Heart left ventricle (tissue), 16 donors: ENCODE measurements at regions of chr7 and their contacts with region 1.

Region 1: DNA sequence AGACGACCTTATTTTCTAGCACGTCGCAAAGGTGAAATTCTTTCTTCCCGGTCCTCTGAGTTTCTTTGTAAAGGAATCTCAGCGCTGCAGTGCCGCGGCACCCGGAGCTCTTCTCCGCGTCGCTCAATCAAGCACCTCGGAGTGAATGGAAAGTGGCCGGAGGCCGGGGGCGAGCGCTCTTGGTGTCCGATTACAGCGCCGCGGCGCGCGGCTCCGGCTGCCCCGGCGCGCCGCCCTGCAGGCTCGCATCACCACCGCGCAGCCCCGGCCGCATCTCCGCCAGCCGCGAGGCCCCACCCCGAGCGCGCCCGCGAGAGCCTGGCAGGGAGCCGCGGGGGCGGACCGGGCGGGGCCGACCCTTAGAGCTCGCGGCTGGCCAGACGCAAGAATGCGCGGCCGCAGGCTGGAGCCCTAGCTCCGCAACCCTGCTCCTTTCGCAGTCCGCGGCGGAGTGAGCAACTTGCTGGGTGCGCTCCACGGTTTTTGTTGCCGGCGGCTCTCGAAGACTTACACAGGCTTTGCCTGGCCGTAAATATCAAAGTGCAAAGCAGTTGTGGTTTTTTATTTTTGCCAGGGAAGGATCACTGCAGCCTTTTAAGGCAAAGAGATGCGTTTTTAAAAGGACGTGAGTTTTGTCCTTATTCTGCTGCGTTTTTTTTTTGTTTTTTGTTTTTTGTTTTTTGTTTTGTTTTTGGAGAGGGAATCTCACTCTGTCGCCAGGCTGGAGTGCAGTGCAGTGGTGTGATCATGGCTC is at the start of gene SEMA3C:
- DNase-seq: peak; percentile 86 to 95 (median 92)
- ATAC-seq: peak; percentile 93 to 99 (median 96)
- H3K4me3 ChIP-seq: peak within 1 kb of the TSS; percentile 38 to 80 (median 66)
- H3K27ac ChIP-seq: peak within 1 kb of the TSS in 11 of 12 donors; percentile 72 to 85 (median 76)
- H3K4me1 ChIP-seq: peaks cover 0 to 20% (median 4%) of the 10 kb centered on the region in 12 donors
- H3K27me3 ChIP-seq: peaks cover 0 to 4% (median 0%) of the 10 kb centered on the region in 9 donors
- CTCF ChIP-seq: peak in 2 of 12 donors; percentile 12 to 16
- POLR2A ChIP-seq: peak in 1 of 2 donors; percentile 50
- total RNA-seq, gene SEMA3C: 40.2 to 110 (median 67.7) TPM

Region 2: DNA sequence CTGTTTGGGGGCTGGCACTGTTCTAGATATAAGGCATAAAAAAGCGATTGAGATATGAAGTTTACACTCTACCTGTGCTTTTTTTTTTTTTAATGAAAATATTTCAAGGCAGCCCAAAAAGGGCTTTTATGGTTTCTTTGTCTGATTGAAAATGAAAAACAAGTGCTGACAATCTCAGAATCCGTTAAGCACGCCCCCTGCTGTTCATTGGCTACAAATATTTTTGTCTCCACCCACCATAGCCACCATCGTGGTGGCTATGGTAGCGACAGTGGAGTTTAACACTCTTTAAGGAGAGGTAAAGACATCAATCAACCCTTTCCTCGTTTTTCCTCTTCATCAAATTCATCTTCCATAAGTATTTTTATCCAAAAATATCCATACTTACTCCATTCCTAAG is 186.5 kb before region 1 on chr7:
- intact Hi-C with region 1: loop called in 1 of 10 experiments (anchors 10 kb)
- DNase-seq: no peak
- ATAC-seq: no peak
- H3K4me3 ChIP-seq: no peak overlapping the region
- H3K27ac ChIP-seq: no peak overlapping the region
- H3K4me1 ChIP-seq: peaks cover 0 to 22% (median 0%) of the 10 kb centered on the region in 12 donors
- H3K27me3 ChIP-seq: no peaks in the 10 kb centered on the region
- CTCF ChIP-seq: peak in 1 of 12 donors; percentile 6
- POLR2A ChIP-seq: no peak

Region 3: DNA sequence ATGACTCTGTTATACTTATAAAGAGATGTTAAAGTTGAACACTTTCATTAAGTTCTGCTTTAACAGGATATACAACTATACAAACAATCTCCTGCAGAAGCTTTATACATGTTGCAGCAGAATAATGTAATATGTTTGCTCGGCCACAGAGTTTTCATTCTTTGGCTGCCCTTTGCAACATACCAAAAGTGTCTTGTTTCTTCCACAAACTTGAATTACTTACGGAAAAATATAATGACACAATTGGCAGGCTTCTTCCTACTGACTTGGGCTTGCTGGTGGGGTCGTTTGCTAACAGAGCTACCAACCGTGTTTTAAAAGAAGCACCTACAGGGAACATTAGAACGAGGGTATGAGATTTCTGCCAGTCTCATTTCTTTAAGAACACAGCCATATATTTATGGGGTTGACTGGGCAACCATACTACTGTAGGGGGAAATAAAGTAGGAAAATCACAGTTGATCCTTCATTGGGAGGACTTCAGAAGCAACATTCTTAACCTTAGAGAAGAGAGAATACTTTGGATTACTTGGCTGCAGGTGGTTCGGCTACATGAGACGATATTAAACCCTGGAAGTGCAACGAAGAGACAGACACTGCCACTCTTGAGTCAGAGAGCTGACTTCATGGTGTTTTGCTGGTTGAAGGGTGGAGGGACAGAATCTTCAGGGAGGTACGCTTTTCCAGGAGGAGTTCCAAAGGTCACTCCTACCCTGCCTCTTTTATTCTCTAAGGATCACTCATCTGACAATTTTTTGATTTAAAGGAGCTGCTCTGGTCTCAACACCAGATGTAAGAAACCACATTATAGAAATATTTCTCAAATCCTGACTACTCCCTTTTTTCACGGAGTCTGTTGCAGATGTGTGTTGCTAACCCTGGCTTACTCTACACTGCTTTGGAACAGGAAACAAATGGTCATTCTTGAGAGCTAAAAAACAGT is 124.2 kb before region 1 on chr7:
- intact Hi-C with region 1: loop called in 1 of 10 experiments (anchors 5 kb)
- DNase-seq: no peak
- ATAC-seq: peak in 3 of 4 donors; percentile 22 to 36 (median 35)
- H3K4me3 ChIP-seq: no peak overlapping the region
- H3K27ac ChIP-seq: peak overlapping the region in 7 of 12 donors; percentile 15 to 69 (median 49)
- H3K4me1 ChIP-seq: peaks cover 0 to 34% (median 13%) of the 10 kb centered on the region in 12 donors
- H3K27me3 ChIP-seq: no peaks in the 10 kb centered on the region
- CTCF ChIP-seq: no peak
- POLR2A ChIP-seq: no peak

Region 4: GRCh38 chr7:81256991-81257390 is 337.9 kb after region 1 on chr7:
- intact Hi-C with region 1: loop called in 8 of 10 experiments (anchors 1 to 10 kb)
- DNase-seq: peak in 2 of 5 donors; percentile 32 to 38
- ATAC-seq: peak in 2 of 4 donors; percentile 56 to 61
- H3K4me3 ChIP-seq: no peak overlapping the region
- H3K27ac ChIP-seq: no peak overlapping the region
- H3K4me1 ChIP-seq: no peaks in the 10 kb centered on the region
- H3K27me3 ChIP-seq: no peaks in the 10 kb centered on the region
- CTCF ChIP-seq: peak in 11 of 12 donors; percentile 15 to 63 (median 45)
- POLR2A ChIP-seq: no peak

Region 5: DNA sequence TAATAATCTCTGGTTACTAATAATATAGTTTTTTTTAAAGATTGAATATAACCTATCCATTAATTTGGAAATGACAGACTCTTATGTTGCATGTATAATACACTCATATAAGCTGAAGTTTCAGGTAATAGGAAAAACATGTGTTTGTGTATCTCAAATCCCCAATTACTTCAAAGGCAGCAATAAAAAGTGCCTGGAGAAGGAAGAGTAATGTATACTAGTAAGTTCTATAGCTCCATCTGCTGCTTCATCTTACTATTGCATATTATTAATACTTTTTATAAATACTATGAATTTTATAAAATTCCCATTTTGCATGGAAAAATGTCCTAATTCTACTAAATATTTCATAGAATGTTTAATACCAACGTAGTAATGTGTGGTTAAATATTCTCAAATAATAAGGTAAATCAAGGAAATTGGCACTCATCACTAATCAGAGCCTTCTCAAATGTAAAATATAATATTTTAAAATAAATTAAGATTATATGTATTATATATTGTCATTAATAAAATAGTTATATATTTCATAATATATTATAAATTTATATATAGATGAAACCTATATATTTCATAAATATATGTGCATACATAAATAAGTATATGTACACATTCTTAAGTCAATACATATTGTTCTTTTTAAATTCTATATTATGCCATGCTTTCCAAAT is 538.9 kb after region 1 on chr7:
- intact Hi-C with region 1: loop called in 5 of 10 experiments (anchors 10 kb)
- DNase-seq: no peak
- ATAC-seq: no peak
- H3K4me3 ChIP-seq: no peak overlapping the region
- H3K27ac ChIP-seq: no peak overlapping the region
- H3K4me1 ChIP-seq: no peaks in the 10 kb centered on the region
- H3K27me3 ChIP-seq: no peaks in the 10 kb centered on the region
- CTCF ChIP-seq: peak in 5 of 12 donors; percentile 34 to 48 (median 46)
- POLR2A ChIP-seq: no peak